Tibial artery (tissue), 4 donors: ENCODE measurements at regions of chr17 and their contacts with region 1.

Region 1: DNA sequence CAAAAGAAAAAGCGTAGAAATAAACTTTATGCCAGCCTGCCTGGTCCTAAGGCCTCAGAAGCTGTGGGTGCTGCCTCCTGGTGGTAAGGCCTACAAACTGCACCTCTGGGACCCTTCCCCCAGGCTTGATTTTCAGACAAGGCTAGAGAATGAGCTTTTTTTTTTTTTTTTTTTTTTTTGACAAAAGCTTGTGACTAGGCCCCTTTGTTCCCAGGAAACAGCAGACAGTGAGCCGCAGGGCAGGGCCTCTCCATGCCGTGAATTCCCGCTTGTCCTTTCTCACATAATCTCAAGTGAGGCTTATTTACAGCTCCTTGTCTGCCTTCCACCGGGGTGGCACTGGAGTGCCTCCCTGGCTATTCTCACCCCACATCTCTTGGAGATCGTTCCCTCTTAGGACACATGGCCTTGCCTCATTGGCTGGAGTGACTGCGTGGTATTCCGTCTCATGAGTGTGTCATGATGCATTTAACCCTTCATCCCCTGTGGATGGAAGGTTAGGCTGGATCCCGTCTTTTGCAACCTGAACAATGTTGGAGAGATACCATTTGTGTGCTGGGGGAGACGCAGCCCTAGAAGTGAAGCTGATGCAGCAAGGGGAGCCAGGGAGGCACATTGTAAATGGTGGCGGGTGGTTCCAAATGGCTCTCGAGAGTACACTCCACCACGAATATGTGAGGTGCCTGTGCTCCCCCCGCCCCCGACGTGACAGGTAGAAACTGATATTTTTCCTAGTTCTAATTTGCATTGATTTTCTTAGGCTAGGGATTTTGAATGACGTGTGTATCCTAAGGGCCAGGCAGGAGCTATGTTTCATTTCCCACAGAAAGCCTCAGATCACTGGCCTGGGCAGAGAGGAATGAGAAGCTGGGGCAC is 49.6 kb downstream of the USP22 start:
- DNase-seq: peak; percentile 55 to 85
- H3K4me3 ChIP-seq: peak overlapping the region; percentile 20 to 22
- H3K27ac ChIP-seq: no peak overlapping the region
- H3K4me1 ChIP-seq: peaks cover 0 to 29% (median 13%) of the 10 kb centered on the region in 4 donors
- H3K27me3 ChIP-seq: no peaks in the 10 kb centered on the region
- CTCF ChIP-seq: peak; percentile 81 to 89

Region 2: DNA sequence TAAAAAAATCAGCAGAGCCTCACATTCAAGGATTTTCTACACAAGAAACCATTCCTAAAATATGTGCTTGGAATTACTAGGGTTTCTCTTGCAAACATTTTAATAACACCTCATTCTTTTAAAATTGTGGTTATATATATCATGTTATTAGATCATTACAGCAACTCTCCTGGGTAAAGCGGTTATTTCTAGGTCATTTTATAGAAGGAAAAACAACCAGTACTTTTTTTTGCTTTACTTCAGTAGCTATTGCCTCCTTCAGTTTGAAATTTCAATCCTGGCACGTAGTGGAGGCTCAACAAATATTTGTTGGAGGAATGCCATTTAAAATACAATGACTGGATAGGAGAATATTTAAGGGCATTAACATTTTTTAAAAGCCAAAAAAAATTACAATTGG is 193.1 kb before region 1 on chr17:
- intact Hi-C with region 1: loop called (anchors 10 kb)
- DNase-seq: no peak
- H3K4me3 ChIP-seq: no peak overlapping the region
- H3K27ac ChIP-seq: no peak overlapping the region
- H3K4me1 ChIP-seq: no peaks in the 10 kb centered on the region
- H3K27me3 ChIP-seq: no peaks in the 10 kb centered on the region
- CTCF ChIP-seq: no peak

Region 3: GRCh38 chr17:20944014-20944865 is 49.0 kb before region 1 on chr17:
- intact Hi-C with region 1: loop called (anchors 10 kb)
- DNase-seq: no peak
- H3K4me3 ChIP-seq: no peak overlapping the region
- H3K27ac ChIP-seq: no peak overlapping the region
- H3K4me1 ChIP-seq: no peaks in the 10 kb centered on the region
- H3K27me3 ChIP-seq: no peaks in the 10 kb centered on the region
- CTCF ChIP-seq: no peak